ENCODE measurements at regions of chr10 and their contacts with region 1.

Region 1: DNA sequence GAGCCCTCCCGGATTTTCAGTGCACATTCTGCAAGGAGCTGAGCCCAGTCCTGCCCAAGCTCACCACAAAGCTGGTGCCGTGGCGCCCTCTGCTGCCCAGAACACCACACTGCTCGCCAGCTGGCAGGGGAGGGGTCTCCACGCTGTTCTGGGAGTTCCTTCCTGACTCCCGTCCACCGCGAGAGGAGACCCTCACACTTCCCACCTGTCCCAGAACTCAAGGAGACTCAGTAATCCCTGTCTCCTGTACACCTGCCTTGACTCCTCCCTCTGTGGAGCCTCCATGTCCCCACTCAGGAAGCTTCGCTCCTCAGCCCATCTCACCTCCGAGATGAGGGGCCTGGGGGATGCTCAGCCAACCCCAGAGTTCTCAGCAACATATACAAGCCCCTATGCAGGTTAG is 11.3 kb downstream of the C10orf105 start:
- DNase-seq: no peak
- H3K4me3 ChIP-seq: no peak overlapping the region
- H3K27ac ChIP-seq: no peak overlapping the region
- H3K4me1 ChIP-seq: peaks cover 13 to 28% (median 21%) of the 10 kb centered on the region in 4 donors
- H3K27me3 ChIP-seq: no peaks in the 10 kb centered on the region
- CTCF ChIP-seq: peak; percentile 79 to 93 (median 90)
- EP300 ChIP-seq: no peak
- POLR2A ChIP-seq: no peak

Region 2: DNA sequence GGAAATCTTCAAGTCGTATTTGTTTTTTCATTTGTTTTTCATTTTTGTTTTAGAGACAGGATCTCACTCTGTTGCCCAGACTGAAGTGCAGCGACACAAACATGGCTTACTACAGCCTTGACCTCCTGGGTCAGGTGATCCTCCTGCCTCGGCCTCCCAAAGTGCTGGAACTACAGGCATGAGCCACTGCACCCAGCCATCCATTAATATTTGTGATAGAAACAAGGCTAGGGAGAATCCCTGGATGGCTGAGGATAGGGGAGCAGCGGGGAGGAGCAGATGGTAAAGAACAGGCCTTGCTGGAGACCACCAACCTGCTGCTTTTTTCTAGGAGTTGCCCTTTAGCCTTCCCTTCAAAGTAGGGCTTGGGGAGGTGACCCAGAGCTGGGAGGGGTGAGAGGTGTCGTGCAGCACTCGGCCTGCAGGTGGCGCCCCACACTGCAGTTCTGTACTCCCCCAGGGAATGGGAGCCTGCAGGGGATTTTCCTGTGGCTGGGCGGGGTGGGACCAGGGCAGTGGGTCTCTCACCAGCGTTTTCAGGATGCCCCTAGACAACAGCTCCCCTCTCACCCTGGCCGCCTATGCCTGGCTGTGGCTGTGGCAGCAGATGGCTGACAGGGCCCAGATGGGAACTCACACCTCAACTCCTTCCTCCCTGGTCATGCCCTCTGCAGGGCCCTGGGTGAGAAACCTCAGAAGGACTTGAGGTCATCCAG is 324.2 kb before region 1 on chr10:
- intact Hi-C with region 1: loop called (anchors 5 kb)
- DNase-seq: no peak
- H3K4me3 ChIP-seq: no peak overlapping the region
- H3K27ac ChIP-seq: no peak overlapping the region
- H3K4me1 ChIP-seq: peaks cover 0 to 6% (median 2%) of the 10 kb centered on the region in 4 donors
- H3K27me3 ChIP-seq: no peaks in the 10 kb centered on the region
- CTCF ChIP-seq: peak; percentile 87 to 98 (median 89)
- EP300 ChIP-seq: no peak
- POLR2A ChIP-seq: no peak

Region 3: GRCh38 chr10:71613261-71613777 is 95.0 kb before region 1 on chr10:
- intact Hi-C with region 1: loop called (anchors 5 kb)
- DNase-seq: no peak
- H3K4me3 ChIP-seq: no peak overlapping the region
- H3K27ac ChIP-seq: peak overlapping the region; percentile 70 to 79 (median 75)
- H3K4me1 ChIP-seq: peaks cover 33 to 81% (median 66%) of the 10 kb centered on the region in 4 donors
- H3K27me3 ChIP-seq: no peaks in the 10 kb centered on the region
- CTCF ChIP-seq: no peak
- EP300 ChIP-seq: no peak
- POLR2A ChIP-seq: no peak

Region 4: GRCh38 chr10:71805776-71806703 is 97.7 kb after region 1 on chr10:
- intact Hi-C with region 1: no loop called
- DNase-seq: no peak
- H3K4me3 ChIP-seq: no peak overlapping the region
- H3K27ac ChIP-seq: no peak overlapping the region
- H3K4me1 ChIP-seq: peaks cover 0 to 9% (median 3%) of the 10 kb centered on the region in 4 donors
- H3K27me3 ChIP-seq: no peaks in the 10 kb centered on the region
- CTCF ChIP-seq: no peak
- EP300 ChIP-seq: no peak
- POLR2A ChIP-seq: no peak

Measured in esophagus muscularis mucosa (tissue), 4 donors.